ENCODE measurements at regions of chr6 and their contacts with region 1.

Region 1: DNA sequence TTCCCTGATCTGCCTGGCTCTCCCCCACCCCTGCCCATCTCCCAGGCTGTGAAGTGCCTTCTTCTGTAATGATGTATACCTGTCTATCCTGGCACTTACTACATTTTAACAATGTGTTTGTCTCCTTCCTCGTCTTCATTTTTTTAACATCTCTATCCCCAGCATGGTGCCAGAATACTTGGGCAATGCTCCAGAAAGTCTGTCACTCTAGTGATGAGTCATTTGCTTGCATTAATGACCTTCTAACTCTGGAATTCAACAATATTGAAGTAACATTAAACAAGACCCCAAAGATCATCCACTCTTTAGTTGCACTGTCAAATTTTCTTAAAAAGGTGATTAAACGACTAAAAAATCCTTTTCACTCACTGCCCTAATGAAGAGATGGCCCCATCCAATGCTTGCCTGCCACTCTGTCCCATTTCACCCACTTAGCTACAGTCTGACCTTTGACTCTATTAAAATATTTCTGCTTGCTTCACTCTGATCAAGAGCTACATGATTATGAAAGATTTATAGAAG is 7.7 kb upstream of the KLHL31 start:
- DNase-seq: no peak
- ATAC-seq: peak; percentile 3 to 52 (median 28)
- H3K4me3 ChIP-seq: no peak overlapping the region
- H3K27ac ChIP-seq: peak overlapping the region; percentile 1 to 77 (median 42)
- H3K4me1 ChIP-seq: peaks cover 0 to 17% (median 5%) of the 10 kb centered on the region in 12 donors
- H3K27me3 ChIP-seq: no peaks in the 10 kb centered on the region
- CTCF ChIP-seq: no peak
- POLR2A ChIP-seq: no peak

Region 2: DNA sequence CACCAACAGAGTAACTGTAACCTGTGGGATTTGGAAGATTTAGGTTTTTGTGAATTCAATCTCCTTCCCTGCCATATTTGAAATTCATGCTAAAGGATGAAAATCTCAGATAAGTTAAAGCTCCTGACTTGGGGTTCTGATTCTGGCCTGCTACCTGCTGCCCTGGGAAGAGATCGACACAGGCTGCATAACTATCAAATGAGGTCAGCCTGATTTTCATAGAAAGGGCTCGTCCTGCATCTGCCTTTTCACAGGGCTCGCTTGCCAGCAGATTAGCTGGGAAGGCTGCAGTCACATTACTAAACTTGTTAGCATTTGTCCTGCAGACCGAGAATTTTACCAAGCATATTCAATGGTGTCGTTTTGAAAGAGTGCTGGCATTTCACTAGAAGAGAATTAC is 142.9 kb before region 1 on chr6:
- intact Hi-C with region 1: loop called in 1 of 10 experiments (anchors 5 kb)
- DNase-seq: peak in 4 of 5 donors; percentile 51 to 58 (median 56)
- ATAC-seq: peak; percentile 66 to 90 (median 84)
- H3K4me3 ChIP-seq: peak overlapping the region in 1 of 12 donors; percentile 14
- H3K27ac ChIP-seq: peak overlapping the region in 11 of 12 donors; percentile 29 to 90 (median 62)
- H3K4me1 ChIP-seq: peaks cover 0 to 71% (median 47%) of the 10 kb centered on the region in 12 donors
- H3K27me3 ChIP-seq: no peaks in the 10 kb centered on the region
- CTCF ChIP-seq: no peak
- POLR2A ChIP-seq: no peak